ENCODE measurements at regions of chr12 and their contacts with region 1.

Region 1: GRCh38 chr12:122752464-122753318 is at the start of gene DENR:
- DNase-seq: peak; percentile 99
- H3K4me3 ChIP-seq: peak within 1 kb of the TSS; percentile 82 to 88 (median 83)
- H3K27ac ChIP-seq: peak within 1 kb of the TSS; percentile 89
- H3K4me1 ChIP-seq: peaks cover 11% of the 10 kb centered on the region
- H3K27me3 ChIP-seq: no peaks in the 10 kb centered on the region
- CTCF ChIP-seq: peak; percentile 88 to 95 (median 91)
- polyA plus RNA-seq, gene DENR: 31.1 to 59.8 TPM (median 37.8 TPM) in 3 replicates

Region 2: DNA sequence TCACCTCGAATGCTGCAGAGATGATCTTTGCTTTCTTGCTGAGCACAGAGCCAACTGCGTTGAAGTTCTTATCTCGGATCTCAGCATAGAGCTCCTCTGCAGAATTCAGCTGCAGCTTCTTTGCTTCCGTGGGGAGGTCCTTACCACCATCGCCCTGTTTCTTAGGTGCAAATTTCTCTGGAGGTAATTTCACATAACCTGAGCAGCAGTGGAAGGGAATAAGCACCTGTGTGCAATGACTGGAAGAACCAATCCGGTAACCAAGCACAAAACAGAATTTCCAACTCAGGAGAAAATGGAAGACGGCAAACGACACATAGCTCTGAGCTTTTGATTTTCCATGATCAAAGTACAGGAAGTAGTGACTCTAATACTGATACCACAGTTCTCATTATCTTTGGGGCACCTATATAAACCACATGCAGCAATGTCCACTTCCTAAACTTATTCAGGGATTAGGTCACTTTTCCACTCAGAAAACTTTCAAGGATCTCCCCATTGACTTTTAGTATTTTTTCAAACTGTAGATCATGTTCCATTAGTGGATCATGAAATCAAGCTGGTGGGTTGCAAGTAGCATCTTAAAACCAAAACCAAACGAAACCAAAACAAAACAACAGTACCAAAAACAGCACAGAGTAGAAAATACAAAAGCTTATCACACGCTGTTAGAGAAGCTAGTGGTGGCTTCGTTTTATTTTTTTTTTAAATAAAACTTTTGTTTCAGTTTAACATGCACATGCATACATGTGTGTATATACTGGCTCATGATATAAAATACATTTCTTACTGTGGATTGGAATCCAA is 507.9 kb before region 1 on chr12:
- dilution Hi-C with region 1: no loop called
- DNase-seq: no peak
- H3K4me3 ChIP-seq: no peak overlapping the region
- H3K27ac ChIP-seq: no peak overlapping the region
- H3K4me1 ChIP-seq: no peaks in the 10 kb centered on the region
- H3K27me3 ChIP-seq: no peaks in the 10 kb centered on the region
- CTCF ChIP-seq: no peak

Region 3: DNA sequence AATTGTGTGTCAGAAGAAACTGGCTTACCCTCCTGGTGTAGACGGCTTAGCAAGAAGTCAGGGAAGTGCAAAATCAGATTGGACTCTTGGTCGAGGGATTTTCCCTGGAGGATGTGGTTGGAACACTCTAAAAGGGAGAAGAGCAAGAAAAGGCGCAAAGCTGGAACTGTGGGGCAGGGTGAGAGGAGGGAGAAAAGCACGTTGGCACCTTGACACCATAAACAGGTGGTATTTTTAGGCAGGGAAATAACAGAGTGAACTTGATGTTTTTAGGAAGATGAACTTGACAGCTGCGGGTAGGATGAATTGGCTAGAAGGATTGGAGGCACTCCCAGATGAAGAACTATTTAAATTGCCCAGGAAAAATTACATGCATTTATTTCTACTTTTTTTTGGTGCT is 117.2 kb before region 1 on chr12:
- dilution Hi-C with region 1: loop called (anchors 10 kb)
- DNase-seq: no peak
- H3K4me3 ChIP-seq: no peak overlapping the region
- H3K27ac ChIP-seq: no peak overlapping the region
- H3K4me1 ChIP-seq: no peaks in the 10 kb centered on the region
- H3K27me3 ChIP-seq: no peaks in the 10 kb centered on the region
- CTCF ChIP-seq: no peak

Region 4: DNA sequence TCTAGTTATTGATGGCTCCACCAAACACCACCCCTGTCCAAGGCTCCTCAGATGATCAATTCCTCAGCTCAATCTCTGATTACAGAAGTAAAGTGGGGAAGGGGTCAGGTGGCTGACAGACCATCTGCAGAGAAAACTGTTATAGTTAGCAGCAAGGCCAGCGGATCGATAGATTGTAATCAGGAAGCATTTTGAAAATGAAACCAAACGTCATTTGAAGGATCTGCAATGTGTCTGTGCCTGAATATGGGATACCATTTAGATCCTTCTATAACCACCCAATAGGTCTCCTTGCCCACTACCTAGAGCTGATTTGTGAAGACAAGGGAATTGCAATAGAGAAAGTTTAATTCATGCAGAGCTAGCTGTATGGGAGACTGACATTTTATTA is 61.1 kb before region 1 on chr12:
- dilution Hi-C with region 1: no loop called
- DNase-seq: no peak
- H3K4me3 ChIP-seq: no peak overlapping the region
- H3K27ac ChIP-seq: no peak overlapping the region
- H3K4me1 ChIP-seq: no peaks in the 10 kb centered on the region
- H3K27me3 ChIP-seq: no peaks in the 10 kb centered on the region
- CTCF ChIP-seq: no peak

Region 5: GRCh38 chr12:122902854-122903692 is 150.4 kb after region 1 on chr12:
- dilution Hi-C with region 1: no loop called
- DNase-seq: no peak
- H3K4me3 ChIP-seq: no peak overlapping the region
- H3K27ac ChIP-seq: no peak overlapping the region
- H3K4me1 ChIP-seq: peaks cover 14% of the 10 kb centered on the region
- H3K27me3 ChIP-seq: no peaks in the 10 kb centered on the region
- CTCF ChIP-seq: no peak